ENCODE measurements at regions of chr3 and their contacts with region 1.

Region 1: GRCh38 chr3:48240711-48241491 is at the start of gene ZNF589:
- DNase-seq: peak; percentile 98
- ATAC-seq: peak; percentile 99
- H3K4me3 Mint-ChIP-seq: peak within 1 kb of the TSS; percentile 92
- H3K27ac Mint-ChIP-seq: peak within 1 kb of the TSS; percentile 96
- H3K4me1 Mint-ChIP-seq: peaks cover 29% of the 10 kb centered on the region
- H3K27me3 Mint-ChIP-seq: no peaks in the 10 kb centered on the region
- total RNA-seq, gene ZNF589: 29.7 to 30.3 TPM

Region 2: GRCh38 chr3:48188266-48189201 is 52.4 kb before region 1 on chr3 and contains the start of gene CDC25A:
- CTCF ChIA-PET with region 1: interaction called, 5 read pairs
- POLR2A ChIA-PET with region 1: interaction called, 10 read pairs
- DNase-seq: peak; percentile 99
- ATAC-seq: peak; percentile 99
- H3K4me3 Mint-ChIP-seq: peak within 1 kb of the TSS; percentile 91
- H3K27ac Mint-ChIP-seq: peak within 1 kb of the TSS; percentile 87
- H3K4me1 Mint-ChIP-seq: peaks cover 33% of the 10 kb centered on the region
- H3K27me3 Mint-ChIP-seq: no peaks in the 10 kb centered on the region
- total RNA-seq, gene CDC25A: 30.3 to 31.3 TPM

Region 3: DNA sequence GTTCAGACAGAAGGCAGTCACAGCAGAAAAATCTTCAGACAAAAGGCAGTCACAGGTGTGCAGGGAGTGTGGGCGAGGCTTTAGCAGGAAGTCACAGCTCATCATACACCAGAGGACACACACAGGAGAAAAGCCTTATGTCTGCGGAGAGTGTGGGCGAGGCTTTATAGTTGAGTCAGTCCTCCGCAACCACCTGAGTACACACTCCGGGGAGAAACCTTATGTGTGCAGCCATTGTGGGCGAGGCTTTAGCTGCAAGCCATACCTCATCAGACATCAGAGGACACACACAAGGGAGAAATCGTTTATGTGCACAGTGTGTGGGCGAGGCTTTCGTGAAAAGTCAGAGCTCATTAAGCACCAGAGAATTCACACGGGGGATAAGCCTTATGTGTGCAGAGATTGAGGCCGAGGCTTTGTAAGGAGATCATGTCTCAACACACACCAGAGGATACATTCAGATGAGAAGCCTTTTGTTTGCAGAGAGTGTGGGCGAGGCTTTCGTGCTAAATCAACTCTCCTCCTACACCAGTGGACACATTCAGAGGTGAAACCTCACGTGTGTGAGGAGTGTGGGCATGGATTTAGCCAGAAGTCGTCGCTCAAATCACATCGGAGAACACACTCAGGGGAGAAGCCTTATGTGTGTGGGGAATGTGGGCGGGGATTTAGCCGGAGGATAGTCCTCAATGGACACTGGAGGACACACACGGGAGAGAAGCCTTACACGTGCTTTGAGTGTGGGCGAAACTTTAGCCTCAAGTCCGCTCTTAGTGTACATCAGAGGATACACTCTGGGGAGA is 27.7 kb after region 1 on chr3:
- CTCF ChIA-PET with region 1: interaction called, 7 read pairs
- POLR2A ChIA-PET with region 1: interaction called, 18 read pairs
- DNase-seq: peak; percentile 89
- ATAC-seq: peak; percentile 97
- H3K4me3 Mint-ChIP-seq: peak overlapping the region; percentile 60
- H3K27ac Mint-ChIP-seq: peak overlapping the region; percentile 85
- H3K4me1 Mint-ChIP-seq: peaks cover 38% of the 10 kb centered on the region
- H3K27me3 Mint-ChIP-seq: no peaks in the 10 kb centered on the region

Region 4: DNA sequence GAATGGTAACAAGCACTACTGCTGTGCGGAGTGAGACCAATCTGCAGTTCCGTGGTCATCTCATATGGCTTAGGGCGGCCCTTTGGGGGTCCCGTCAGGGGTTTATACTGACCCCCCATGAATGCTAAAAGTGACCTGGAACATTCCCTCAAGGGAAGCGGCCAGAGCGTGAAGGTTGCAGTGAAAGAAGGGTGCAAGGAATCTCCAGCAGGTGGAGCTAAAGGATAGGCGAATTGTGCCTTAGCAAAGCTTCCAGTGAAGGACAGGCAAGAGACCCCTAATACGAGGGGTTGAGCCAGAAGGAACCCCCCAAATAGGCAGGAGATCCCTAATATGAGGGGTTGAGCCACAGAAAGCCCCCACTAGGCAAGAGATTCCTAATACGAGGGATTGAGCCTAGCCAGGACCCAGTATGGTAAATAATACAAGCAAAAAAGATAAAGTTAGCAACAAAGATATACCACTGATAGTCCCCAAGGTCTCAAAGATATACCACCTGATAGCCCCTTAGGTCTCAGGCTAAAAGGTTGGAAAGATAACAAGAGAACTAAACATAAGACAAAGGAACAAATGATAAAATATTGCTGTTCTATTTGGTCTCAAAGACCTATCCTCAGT is 32.8 kb after region 1 on chr3:
- CTCF ChIA-PET with region 1: interaction called, 7 read pairs
- POLR2A ChIA-PET with region 1: interaction called, 18 read pairs
- DNase-seq: peak; percentile 72
- ATAC-seq: peak; percentile 44
- H3K4me3 Mint-ChIP-seq: no peak overlapping the region
- H3K27ac Mint-ChIP-seq: no peak overlapping the region
- H3K4me1 Mint-ChIP-seq: peaks cover 20% of the 10 kb centered on the region
- H3K27me3 Mint-ChIP-seq: no peaks in the 10 kb centered on the region

Region 5: GRCh38 chr3:48301020-48301796 is 60.3 kb after region 1 on chr3:
- CTCF ChIA-PET with region 1: interaction called, 3 read pairs
- POLR2A ChIA-PET with region 1: interaction called, 11 read pairs
- DNase-seq: peak; percentile 94
- ATAC-seq: peak; percentile 89
- H3K4me3 Mint-ChIP-seq: peak within 1 kb of the TSS; percentile 93
- H3K27ac Mint-ChIP-seq: peak within 1 kb of the TSS; percentile 97
- H3K4me1 Mint-ChIP-seq: peaks cover 40% of the 10 kb centered on the region
- H3K27me3 Mint-ChIP-seq: peaks cover 8% of the 10 kb centered on the region

Region 6: DNA sequence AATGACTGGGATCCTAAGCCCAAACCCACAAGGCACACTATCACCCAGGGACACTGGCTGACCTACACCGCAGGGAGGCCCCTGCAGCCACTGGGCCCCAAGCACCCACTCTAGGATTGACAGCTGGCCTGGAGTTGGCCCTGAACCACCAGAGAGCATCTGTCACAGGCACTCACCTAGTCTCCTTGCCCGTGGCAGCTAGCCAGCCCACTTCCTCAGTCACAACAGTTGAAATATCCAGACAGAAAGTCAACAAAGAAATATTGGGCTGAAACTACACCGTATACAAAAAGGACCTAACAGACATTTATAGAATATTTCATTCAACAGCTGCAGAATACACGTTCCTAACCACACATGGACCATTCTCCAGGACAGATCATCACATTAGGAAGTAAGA is 97.7 kb after region 1 on chr3:
- CTCF ChIA-PET with region 1: no interaction called
- POLR2A ChIA-PET with region 1: no interaction called
- DNase-seq: no peak
- ATAC-seq: no peak
- H3K4me3 Mint-ChIP-seq: no peak overlapping the region
- H3K27ac Mint-ChIP-seq: no peak overlapping the region
- H3K4me1 Mint-ChIP-seq: peaks cover 2% of the 10 kb centered on the region
- H3K27me3 Mint-ChIP-seq: peaks cover 7% of the 10 kb centered on the region

Measured in activated CD8-positive, alpha-beta T cell treated with anti-CD3 and anti-CD28 coated beads, Interleukin-2, amount 10 ng/mL, durations not matched to agents 7 days and 5 days (primary cell).